Head of caudate nucleus (tissue), 42 donors: ENCODE measurements at regions of chr6 and their contacts with region 1.

Region 1: DNA sequence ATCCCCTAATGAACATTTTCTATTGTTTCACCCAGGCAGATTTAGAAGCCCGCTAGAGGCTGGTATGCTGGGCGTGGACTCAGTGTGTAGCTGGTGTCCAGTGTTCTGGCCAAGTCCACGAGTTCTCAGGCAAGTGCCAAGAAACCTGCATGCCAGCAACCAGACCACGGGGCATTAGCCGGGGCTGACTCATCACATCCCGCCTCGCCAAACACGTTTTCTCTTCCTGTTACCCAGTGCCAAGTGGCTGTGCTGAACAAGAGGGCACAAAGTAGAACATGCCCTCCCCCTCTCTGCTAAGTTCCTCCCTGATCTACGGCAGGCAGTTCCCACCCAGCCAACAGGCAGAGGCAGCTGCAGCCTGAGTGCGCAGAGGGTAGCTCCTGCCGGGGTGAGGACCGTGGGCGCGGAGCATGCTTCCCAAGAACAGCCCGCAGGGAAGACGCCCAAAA is 29.6 kb downstream of the RAMACL start:
- DNase-seq: peak; percentile 78 to 97 (median 88)

Region 2: GRCh38 chr6:166411721-166412151 is 145.2 kb before region 1 on chr6:
- intact Hi-C with region 1: no loop called
- DNase-seq: peak in 1 of 42 donors; percentile 30

Region 3: GRCh38 chr6:166490671-166491500 is 66.0 kb before region 1 on chr6:
- intact Hi-C with region 1: loop called (anchors 10 kb)
- DNase-seq: peak in 3 of 42 donors; percentile 12 to 24 (median 14)

Region 4: DNA sequence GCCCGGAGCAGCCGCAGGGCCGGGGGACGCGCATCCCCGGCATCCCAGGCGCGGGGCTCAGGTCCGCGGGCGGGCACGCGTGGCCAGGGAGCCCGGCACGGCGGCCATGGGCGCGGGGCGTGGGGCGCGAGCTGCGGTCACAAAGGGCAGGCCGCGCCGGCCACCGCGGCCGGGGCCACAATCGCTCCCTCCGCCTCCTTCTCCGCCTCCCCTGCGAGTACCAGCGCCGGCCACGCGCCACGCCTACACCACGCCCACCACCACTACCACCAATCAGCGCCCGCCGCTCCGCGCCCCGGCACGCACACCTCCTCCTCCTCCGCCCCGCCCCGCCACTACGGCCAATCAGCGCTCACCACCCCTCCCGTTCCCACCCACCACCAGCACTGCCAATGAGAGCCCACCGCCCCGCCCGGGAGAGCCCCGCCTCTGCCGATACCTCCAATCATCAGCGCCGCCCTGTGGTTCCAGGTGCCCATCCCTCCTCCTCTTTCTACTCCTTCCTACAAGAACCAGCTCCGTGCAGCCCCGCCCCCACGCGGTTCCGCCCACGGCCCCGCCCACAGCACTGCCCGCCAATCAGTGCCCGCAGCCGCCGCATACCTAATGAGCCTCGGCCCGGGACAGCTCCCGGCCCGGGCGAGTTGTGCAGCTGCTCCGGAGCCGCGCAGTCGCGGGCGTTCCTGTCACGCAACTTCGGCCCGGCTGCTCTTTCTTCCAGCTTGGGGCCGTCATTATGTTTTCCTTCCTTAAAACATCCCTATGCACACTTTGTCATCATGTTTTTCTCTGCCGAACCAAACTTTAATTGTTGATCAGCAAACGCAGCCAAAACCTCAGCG is 70.4 kb after region 1 on chr6 and contains the start of gene RPS6KA2:
- intact Hi-C with region 1: loop called (anchors 5 kb)
- DNase-seq: peak; percentile 99 to 100 (median 100)